Activated naive CD4-positive, alpha-beta T cell treated with anti-CD3 and anti-CD28 coated beads for 36 hours (primary cell): ENCODE measurements at regions of chr5 and their contacts with region 1.

Region 1: GRCh38 chr5:11494340-11494739 is 409.9 kb downstream of the CTNND2 start:
- DNase-seq: no peak
- H3K4me3 Mint-ChIP-seq: no peak overlapping the region
- H3K27ac Mint-ChIP-seq: no peak overlapping the region
- H3K4me1 Mint-ChIP-seq: no peaks in the 10 kb centered on the region
- H3K27me3 Mint-ChIP-seq: peaks cover 3% of the 10 kb centered on the region

Region 2: GRCh38 chr5:10452768-10453331 is 1041.5 kb before region 1 on chr5:
- CTCF ChIA-PET with region 1: no interaction called
- intact Hi-C with region 1: loop called (anchors 10 kb)
- DNase-seq: peak; percentile 22
- H3K4me3 Mint-ChIP-seq: no peak overlapping the region
- H3K27ac Mint-ChIP-seq: no peak overlapping the region
- H3K4me1 Mint-ChIP-seq: peaks cover 1% of the 10 kb centered on the region
- H3K27me3 Mint-ChIP-seq: no peaks in the 10 kb centered on the region

Region 3: GRCh38 chr5:11268891-11269290 is 225.4 kb before region 1 on chr5:
- CTCF ChIA-PET with region 1: no interaction called
- intact Hi-C with region 1: loop called (anchors 5 kb)
- DNase-seq: no peak
- H3K4me3 Mint-ChIP-seq: no peak overlapping the region
- H3K27ac Mint-ChIP-seq: no peak overlapping the region
- H3K4me1 Mint-ChIP-seq: no peaks in the 10 kb centered on the region
- H3K27me3 Mint-ChIP-seq: peaks cover 6% of the 10 kb centered on the region